HCT116 (cell line): ENCODE measurements at regions of chr4 and their contacts with region 1.

Region 1: GRCh38 chr4:11635359-11636072 is 206.8 kb upstream of the HS3ST1 start:
- DNase-seq: peak; percentile 88
- ATAC-seq: peak; percentile 41
- H3K4me3 ChIP-seq: peak overlapping the region in 1 of 2 experiments; percentile 3; a peak in 2 of 4 replicates
- H3K27ac ChIP-seq: peak overlapping the region; percentile 94
- H3K4me1 ChIP-seq: peaks cover 68 to 75% of the 10 kb centered on the region in 2 experiments
- H3K27me3 ChIP-seq: no peaks in the 10 kb centered on the region
- CTCF ChIP-seq: no peak
- POLR2A ChIP-seq: no peak
- RAD21 ChIP-seq: no peak

Region 2: GRCh38 chr4:10582059-10582686 is 1053.3 kb before region 1 on chr4:
- CTCF ChIA-PET with region 1: no interaction called
- POLR2A ChIA-PET with region 1: no interaction called
- RAD21 ChIA-PET with region 1: no interaction called
- intact Hi-C with region 1: loop called (anchors 5 kb)
- DNase-seq: peak; percentile 54
- ATAC-seq: peak; percentile 94
- H3K4me3 ChIP-seq: no peak overlapping the region
- H3K27ac ChIP-seq: no peak overlapping the region
- H3K4me1 ChIP-seq: peaks cover 0 to 9% of the 10 kb centered on the region in 2 experiments; a peak in 1 of 4 replicates
- H3K27me3 ChIP-seq: no peaks in the 10 kb centered on the region
- CTCF ChIP-seq: peak; percentile 72 to 94 (median 76)
- POLR2A ChIP-seq: no peak
- RAD21 ChIP-seq: peak; percentile 93

Region 3: DNA sequence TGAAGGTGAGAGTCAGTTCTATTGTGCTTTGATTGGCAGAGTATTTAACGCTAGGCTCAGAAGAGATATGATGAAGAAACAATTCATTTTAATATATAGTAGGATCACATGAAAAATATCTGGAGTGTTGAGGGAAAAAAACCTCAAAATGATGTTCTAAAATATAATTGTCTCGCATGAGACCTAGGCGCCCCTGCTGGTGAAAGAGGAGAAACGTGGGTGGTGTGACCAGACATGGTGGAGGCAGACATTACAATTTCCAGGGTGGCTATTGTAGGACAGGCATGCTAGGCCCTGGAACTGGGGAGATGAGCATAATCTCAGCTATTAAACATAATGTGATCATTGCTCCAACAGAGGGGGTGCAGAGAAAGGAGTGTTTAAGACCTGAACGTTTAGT is 416.8 kb before region 1 on chr4:
- CTCF ChIA-PET with region 1: no interaction called
- POLR2A ChIA-PET with region 1: no interaction called
- RAD21 ChIA-PET with region 1: no interaction called
- intact Hi-C with region 1: no loop called
- DNase-seq: peak; percentile 24
- ATAC-seq: peak; percentile 91
- H3K4me3 ChIP-seq: no peak overlapping the region
- H3K27ac ChIP-seq: no peak overlapping the region
- H3K4me1 ChIP-seq: no peaks in the 10 kb centered on the region
- H3K27me3 ChIP-seq: no peaks in the 10 kb centered on the region
- CTCF ChIP-seq: peak in 2 of 3 experiments; percentile 61 to 73; a peak in 3 of 6 replicates
- POLR2A ChIP-seq: no peak
- RAD21 ChIP-seq: peak; percentile 39

Region 4: GRCh38 chr4:11505221-11505971 is 130.1 kb before region 1 on chr4:
- CTCF ChIA-PET with region 1: no interaction called
- POLR2A ChIA-PET with region 1: interaction called, 53 read pairs
- RAD21 ChIA-PET with region 1: no interaction called
- intact Hi-C with region 1: no loop called
- DNase-seq: peak; percentile 99
- ATAC-seq: peak; percentile 89
- H3K4me3 ChIP-seq: no peak overlapping the region
- H3K27ac ChIP-seq: peak overlapping the region; percentile 88
- H3K4me1 ChIP-seq: peaks cover 53 to 58% of the 10 kb centered on the region in 2 experiments
- H3K27me3 ChIP-seq: no peaks in the 10 kb centered on the region
- CTCF ChIP-seq: no peak
- POLR2A ChIP-seq: no peak
- RAD21 ChIP-seq: no peak

Region 5: GRCh38 chr4:11548597-11549082 is 86.9 kb before region 1 on chr4:
- CTCF ChIA-PET with region 1: no interaction called
- POLR2A ChIA-PET with region 1: interaction called, 32 read pairs
- RAD21 ChIA-PET with region 1: no interaction called
- intact Hi-C with region 1: loop called (anchors 2 kb)
- DNase-seq: peak; percentile 95
- ATAC-seq: peak; percentile 84
- H3K4me3 ChIP-seq: no peak overlapping the region
- H3K27ac ChIP-seq: peak overlapping the region; percentile 96
- H3K4me1 ChIP-seq: peaks cover 61 to 70% of the 10 kb centered on the region in 2 experiments
- H3K27me3 ChIP-seq: no peaks in the 10 kb centered on the region
- CTCF ChIP-seq: no peak
- POLR2A ChIP-seq: no peak
- RAD21 ChIP-seq: peak; percentile 23; the same call in 1 of the 2 replicates

Region 6: GRCh38 chr4:11623726-11624037 is 11.8 kb before region 1 on chr4:
- CTCF ChIA-PET with region 1: interaction called, 3 read pairs
- POLR2A ChIA-PET with region 1: interaction called, 60 read pairs
- RAD21 ChIA-PET with region 1: interaction called in 1 of 2 experiments, 3 read pairs
- intact Hi-C with region 1: no loop called
- DNase-seq: no peak
- ATAC-seq: peak; percentile 49
- H3K4me3 ChIP-seq: no peak overlapping the region
- H3K27ac ChIP-seq: peak overlapping the region; percentile 94
- H3K4me1 ChIP-seq: peaks cover 58 to 87% of the 10 kb centered on the region in 2 experiments
- H3K27me3 ChIP-seq: no peaks in the 10 kb centered on the region
- CTCF ChIP-seq: peak in 2 of 3 experiments; percentile 63 to 67; a peak in 4 of 6 replicates
- POLR2A ChIP-seq: no peak
- RAD21 ChIP-seq: no peak

Region 7: DNA sequence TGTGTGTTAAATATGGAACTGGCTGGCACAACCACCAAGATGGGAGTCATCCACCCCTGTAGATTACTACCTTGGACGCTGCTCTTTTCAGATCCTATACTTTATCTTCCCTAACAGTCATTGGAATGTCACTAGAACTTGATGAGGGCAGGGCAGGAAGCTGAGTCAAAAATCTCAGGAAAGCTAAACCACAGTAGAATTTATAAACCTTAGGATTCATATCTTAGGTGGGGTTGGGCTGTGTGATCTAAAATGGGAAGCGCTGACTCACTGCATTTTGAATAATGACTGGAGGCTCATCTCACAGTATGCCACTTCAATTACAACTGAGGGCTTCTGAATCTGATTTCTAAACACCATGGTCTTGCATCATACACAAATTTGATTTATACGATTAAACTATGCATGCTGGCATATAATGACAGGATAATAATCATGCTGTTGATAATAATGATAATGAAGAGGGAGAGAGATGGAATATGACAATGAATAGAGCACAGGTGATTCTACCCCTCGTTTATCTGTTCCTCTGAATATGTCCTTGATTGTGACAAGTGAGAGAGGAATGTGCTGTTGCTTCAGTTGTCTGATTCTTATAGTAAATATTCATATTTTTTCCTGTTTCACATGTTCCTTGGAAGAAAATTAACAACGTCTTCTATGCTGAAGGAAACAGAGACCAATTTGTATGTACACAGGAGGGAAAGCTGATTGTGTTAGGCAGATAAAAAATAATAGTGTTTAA is 63.5 kb after region 1 on chr4:
- CTCF ChIA-PET with region 1: interaction called, 4 read pairs
- POLR2A ChIA-PET with region 1: interaction called, 33 read pairs
- RAD21 ChIA-PET with region 1: no interaction called
- intact Hi-C with region 1: loop called (anchors 2 kb)
- DNase-seq: peak; percentile 95
- ATAC-seq: peak; percentile 87
- H3K4me3 ChIP-seq: peak overlapping the region in 1 of 2 experiments; percentile 3; a peak in 1 of 4 replicates
- H3K27ac ChIP-seq: peak overlapping the region; percentile 97
- H3K4me1 ChIP-seq: peaks cover 51 to 81% of the 10 kb centered on the region in 2 experiments
- H3K27me3 ChIP-seq: no peaks in the 10 kb centered on the region
- CTCF ChIP-seq: no peak
- POLR2A ChIP-seq: peak; percentile 22
- RAD21 ChIP-seq: peak; percentile 37; the same call in 1 of the 2 replicates

Region 8: GRCh38 chr4:11954093-11954492 is 318.6 kb after region 1 on chr4:
- CTCF ChIA-PET with region 1: no interaction called
- POLR2A ChIA-PET with region 1: no interaction called
- RAD21 ChIA-PET with region 1: no interaction called
- intact Hi-C with region 1: loop called (anchors 10 kb)
- DNase-seq: peak; percentile 44
- ATAC-seq: peak; percentile 72
- H3K4me3 ChIP-seq: no peak overlapping the region
- H3K27ac ChIP-seq: no peak overlapping the region
- H3K4me1 ChIP-seq: peaks cover 0 to 10% of the 10 kb centered on the region in 2 experiments; a peak in 2 of 4 replicates
- H3K27me3 ChIP-seq: no peaks in the 10 kb centered on the region
- CTCF ChIP-seq: peak; percentile 56 to 71 (median 71); a peak in 5 of 6 replicates
- POLR2A ChIP-seq: no peak
- RAD21 ChIP-seq: peak; percentile 74